ENCODE measurements at regions of chr22 and their contacts with region 1.

Region 1: DNA sequence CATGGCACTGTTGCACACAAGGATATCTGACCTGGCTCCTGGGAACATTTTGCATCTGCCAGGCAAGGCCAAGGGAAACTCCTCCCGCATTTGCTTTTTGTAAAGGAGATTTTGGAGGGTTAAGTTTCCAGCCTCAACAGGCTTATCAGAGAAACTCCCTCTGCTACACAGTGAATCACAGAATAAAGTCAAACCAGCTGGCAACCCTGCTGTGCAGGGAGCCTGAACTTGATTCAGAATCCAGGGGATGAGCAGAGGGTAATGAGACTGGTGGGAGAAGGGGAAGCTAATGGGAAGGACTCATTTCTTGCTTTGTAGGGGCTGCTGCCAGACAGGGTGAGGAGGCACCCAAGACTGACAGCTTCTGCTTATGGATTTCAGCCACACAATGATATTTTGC is 185.3 kb upstream of the ISX start:
- DNase-seq: no peak

Region 2: GRCh38 chr22:32920032-32920628 is 1960.5 kb before region 1 on chr22:
- intact Hi-C with region 1: no loop called
- DNase-seq: no peak

Region 3: GRCh38 chr22:33715237-33715985 is 1165.3 kb before region 1 on chr22:
- intact Hi-C with region 1: loop called in 1 of 2 experiments (anchors 5 kb)
- DNase-seq: no peak